ENCODE measurements at regions of chr16 and their contacts with region 1.

Region 1: GRCh38 chr16:71878911-71879310 is 5.1 kb downstream of the ZNF821 start:
- DNase-seq: no peak
- H3K4me3 ChIP-seq: no peak overlapping the region
- CTCF ChIP-seq: no peak
- POLR2A ChIP-seq: no peak

Region 2: DNA sequence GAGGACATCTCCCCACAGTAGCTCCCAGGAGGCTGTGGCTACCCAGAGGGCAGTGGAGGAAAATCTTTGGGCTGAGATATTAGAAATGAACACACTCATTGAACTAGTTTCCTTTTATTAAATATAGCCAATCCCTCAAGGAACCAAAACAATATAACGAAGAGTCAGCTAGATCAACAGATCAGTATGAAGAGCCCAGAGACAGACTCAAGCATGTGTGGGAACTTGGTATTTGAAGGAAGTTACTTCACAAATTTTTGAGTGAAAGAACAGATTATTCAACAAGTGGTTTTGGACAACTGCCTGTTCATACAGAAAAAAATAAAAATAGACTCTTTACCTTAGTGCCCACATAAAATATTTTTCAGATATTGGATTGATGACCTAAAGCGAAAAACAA is 476.6 kb after region 1 on chr16:
- intact Hi-C with region 1: no loop called
- DNase-seq: no peak
- H3K4me3 ChIP-seq: no peak overlapping the region
- CTCF ChIP-seq: no peak
- POLR2A ChIP-seq: no peak

Region 3: GRCh38 chr16:73560497-73560896 is 1681.6 kb after region 1 on chr16:
- intact Hi-C with region 1: loop called (anchors 5 kb)
- DNase-seq: no peak
- H3K4me3 ChIP-seq: no peak overlapping the region
- CTCF ChIP-seq: no peak
- POLR2A ChIP-seq: no peak